GM23248 (cell line): ENCODE measurements at regions of chr11 and their contacts with region 1.

Region 1: DNA sequence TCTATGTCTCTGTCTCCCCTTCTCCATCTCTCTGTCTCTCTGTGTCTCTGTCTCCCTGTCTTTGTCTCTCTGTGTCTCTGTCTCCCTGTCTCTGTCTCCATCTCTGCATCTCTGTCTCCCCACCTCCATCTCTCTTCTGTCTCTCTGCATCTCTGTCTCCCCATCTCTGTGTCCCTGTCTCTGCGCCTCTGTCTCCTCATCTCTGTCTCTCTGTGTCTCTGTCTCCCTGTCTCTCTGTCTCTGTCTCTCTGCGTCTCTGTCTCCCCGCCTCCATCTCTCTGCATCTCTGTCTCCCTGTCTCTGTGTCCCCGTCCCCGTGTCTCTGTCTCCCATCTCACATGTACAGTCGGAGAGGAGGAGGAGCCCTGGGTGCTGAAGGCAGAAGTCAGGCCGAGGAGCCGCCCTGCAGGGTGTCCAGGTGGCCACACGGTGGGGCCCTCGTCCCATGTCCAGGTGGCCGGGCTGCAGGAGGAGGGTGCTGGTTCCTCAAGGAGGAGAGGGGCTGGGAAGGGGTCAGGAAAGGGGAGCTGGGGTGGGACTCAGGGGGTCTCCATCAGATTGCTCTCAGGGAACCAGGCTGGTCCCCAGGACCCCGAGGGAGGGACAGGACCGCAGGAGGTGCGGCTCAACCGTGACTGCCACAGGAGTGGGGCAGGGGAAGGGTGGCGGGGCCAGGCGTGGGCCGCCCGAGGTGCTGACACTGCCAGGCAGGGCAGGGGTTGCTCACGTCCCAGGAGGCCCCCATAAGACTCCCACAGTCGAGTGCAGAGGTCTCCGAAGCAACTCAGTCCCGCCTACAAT is 25.6 kb upstream of the TH start:
- DNase-seq: peak; percentile 85
- H3K4me3 ChIP-seq: no peak overlapping the region
- H3K27ac ChIP-seq: no peak overlapping the region
- H3K4me1 ChIP-seq: no peaks in the 10 kb centered on the region
- H3K27me3 ChIP-seq: 0 out of 2 replicates have a peak, but pooled peaks cover 9% of the 10 kb centered on the region

Region 2: GRCh38 chr11:2298795-2299761 is 101.9 kb after region 1 on chr11:
- in situ Hi-C with region 1: loop called (anchors 25 kb)
- DNase-seq: no peak
- H3K4me3 ChIP-seq: no peak overlapping the region
- H3K27ac ChIP-seq: no peak overlapping the region
- H3K4me1 ChIP-seq: no peaks in the 10 kb centered on the region
- H3K27me3 ChIP-seq: peaks cover 6% of the 10 kb centered on the region; the same call in 1 of the 2 replicates